PC-3 (cell line): ENCODE measurements at regions of chr5 and their contacts with region 1.

Region 1: DNA sequence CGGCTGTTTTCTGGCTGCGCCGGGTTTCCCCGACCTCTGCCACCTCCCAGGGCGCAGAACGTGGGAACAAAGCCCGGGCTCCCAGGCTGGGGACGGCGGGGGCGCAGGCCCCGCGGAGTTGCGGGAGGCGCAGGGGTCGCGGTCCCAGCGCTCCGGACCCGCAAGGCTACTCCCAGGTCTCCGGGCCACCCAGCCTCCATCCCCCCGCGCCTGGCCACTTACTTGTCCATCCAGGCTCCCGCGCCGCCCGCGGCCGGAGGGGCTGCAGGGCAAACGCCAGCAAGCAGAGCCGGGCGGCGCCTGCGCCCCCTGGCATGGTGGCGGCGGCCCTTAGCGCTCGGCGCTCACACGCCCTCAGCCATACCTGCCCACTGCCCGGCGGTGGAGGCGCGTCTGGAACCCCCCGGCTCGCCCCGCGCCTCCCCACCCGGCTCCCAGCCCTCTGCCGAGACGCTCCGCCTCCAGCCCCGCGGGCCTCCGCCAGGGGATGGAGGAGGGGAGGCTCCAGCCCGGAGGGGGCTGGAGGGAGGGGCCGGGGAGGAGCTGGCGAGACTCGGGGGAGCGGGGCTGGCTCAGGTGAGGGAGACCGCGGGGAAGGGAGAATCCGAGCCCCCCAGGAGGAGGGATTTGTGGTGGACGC is at the start of gene ADAM19:
- DNase-seq: peak; percentile 86
- ATAC-seq: peak; percentile 86
- H3K4me3 ChIP-seq: peak within 1 kb of the TSS; percentile 96
- H3K27ac ChIP-seq: peak within 1 kb of the TSS; percentile 76
- H3K4me1 ChIP-seq: peaks cover 34% of the 10 kb centered on the region
- H3K27me3 ChIP-seq: no peaks in the 10 kb centered on the region
- CTCF ChIP-seq: peak; percentile 22; the same call in 1 of the 2 replicates
- total RNA-seq, gene ADAM19: 115 and 130 TPM in 2 replicates

Region 2: DNA sequence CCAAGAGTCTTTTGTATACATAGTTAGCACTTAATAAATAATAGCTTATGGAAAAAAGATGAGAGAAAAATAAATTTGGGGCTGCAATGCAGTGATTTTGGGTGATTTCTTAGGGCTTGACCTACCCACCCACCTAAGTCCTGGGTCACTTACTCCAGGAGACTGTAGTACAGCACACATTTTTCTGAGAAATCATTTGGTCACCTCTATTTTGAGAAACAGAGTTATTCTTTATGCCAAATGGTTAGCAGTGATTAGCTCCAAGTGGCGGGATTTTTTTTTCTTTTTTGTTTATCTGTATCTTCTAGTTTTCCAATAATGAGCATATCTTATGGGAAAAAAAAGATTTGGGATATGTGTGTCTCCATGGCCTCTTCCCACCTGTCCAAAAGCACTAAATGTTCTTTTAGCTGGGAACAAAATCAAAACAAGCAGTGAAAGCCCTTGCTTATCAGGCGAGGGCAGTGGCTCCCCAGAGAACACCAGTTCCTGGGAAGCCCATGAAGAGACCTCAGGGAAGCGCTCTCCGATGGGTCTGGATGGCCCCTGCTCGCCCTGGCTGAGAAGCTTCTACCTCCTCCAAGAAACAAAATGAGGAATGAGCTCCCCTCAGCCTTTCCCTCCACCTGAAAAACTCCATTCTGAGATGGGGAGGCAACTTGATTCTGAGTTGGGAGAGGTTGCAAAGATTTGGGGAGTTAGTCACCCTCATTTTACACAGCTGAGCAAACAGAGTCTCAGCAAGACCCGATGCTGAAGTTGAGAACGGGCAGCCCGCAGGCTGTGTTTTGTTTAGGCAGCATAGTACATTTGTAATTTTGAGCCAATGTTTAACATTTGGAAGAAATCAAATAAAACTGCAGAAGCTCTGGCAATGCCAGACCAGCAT is 239.7 kb before region 1 on chr5:
- CTCF ChIA-PET with region 1: no interaction called
- POLR2A ChIA-PET with region 1: no interaction called
- intact Hi-C with region 1: loop called (anchors 10 kb)
- DNase-seq: peak; percentile 53
- ATAC-seq: peak; percentile 82
- H3K4me3 ChIP-seq: no peak overlapping the region
- H3K27ac ChIP-seq: no peak overlapping the region
- H3K4me1 ChIP-seq: peaks cover 11% of the 10 kb centered on the region
- H3K27me3 ChIP-seq: no peaks in the 10 kb centered on the region
- CTCF ChIP-seq: no peak

Region 3: GRCh38 chr5:157548513-157549297 is 26.8 kb before region 1 on chr5:
- CTCF ChIA-PET with region 1: no interaction called
- POLR2A ChIA-PET with region 1: no interaction called
- intact Hi-C with region 1: loop called (anchors 2 kb)
- DNase-seq: peak; percentile 81
- ATAC-seq: no peak
- H3K4me3 ChIP-seq: peak overlapping the region; percentile 1; the same call in 1 of the 2 replicates
- H3K27ac ChIP-seq: peak overlapping the region; percentile 70
- H3K4me1 ChIP-seq: peaks cover 39% of the 10 kb centered on the region
- H3K27me3 ChIP-seq: no peaks in the 10 kb centered on the region
- CTCF ChIP-seq: no peak

Region 4: DNA sequence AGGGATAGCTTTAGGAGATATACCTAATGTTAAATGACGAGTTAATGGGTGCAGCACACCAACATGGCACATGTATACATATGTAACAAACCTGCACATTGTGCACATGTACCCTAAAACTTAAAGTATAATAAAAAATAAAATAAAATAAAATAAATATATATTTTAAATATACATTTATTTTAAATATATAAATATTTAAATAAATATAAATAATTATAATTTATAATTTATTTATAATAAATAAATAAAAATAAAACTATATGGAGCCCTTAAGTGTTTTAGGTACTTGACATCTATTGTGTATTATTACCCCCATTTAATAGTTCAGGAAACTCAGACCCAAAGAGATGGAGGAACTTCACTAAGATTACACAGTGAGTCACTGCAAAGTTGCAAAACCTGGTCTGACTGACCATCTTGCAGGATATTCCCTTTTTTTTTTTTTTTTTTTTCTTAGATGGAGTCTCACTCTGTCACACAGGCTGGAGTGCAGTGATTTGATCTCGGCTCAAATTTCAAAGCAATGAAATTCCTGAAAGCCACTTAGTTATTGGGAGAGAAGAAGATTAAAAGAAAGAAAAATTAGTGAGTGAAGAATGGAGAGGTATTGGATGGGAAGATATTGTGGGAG is 90.1 kb after region 1 on chr5:
- CTCF ChIA-PET with region 1: no interaction called
- POLR2A ChIA-PET with region 1: no interaction called
- intact Hi-C with region 1: loop called (anchors 1 kb)
- DNase-seq: peak; percentile 98
- ATAC-seq: peak; percentile 64
- H3K4me3 ChIP-seq: no peak overlapping the region
- H3K27ac ChIP-seq: peak overlapping the region; percentile 70
- H3K4me1 ChIP-seq: peaks cover 20% of the 10 kb centered on the region
- H3K27me3 ChIP-seq: no peaks in the 10 kb centered on the region
- CTCF ChIP-seq: no peak

Region 5: DNA sequence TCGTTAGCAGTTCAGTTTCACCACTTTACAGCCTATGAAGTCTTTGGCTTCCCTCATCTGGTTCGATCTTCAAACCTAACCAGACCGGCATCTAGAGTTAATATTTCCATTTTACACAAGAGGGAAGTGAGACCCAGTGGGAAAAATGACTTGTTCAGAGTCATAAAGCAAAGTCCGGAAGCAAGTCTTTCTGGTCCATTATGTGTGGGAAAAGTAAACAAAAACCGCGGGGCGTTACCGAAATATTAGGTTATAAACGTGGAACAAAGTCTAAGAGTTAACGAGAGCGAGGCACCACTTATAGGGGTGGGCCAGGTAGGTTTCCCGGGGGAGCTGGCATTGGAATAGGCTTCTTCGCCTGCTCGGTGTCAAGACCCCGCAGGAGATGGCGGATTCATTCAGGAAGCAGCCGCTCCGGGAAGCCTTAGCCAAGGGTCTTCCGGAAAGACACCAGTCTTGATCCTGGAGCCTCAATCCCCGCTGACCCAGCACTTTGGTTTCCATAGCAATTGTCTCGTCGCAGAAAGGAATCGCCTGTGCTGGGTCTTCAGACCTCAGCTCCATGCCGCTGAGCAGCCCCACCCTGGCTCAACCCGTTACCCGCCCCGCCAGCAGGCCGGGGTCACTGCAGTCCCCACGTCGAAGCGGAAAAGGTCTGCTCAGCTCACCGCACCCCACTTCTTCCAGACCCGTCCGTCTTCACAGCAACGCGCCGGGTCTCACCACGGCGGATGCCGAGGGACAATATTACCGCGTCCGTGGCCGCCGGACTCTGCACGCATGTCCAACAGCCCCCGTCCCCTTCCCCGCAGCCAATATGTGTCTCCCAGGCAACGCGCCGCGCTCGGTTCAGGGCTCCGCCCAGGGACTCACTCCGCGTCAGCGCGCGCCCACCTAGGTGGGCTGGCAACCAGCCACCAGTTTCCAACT is 95.4 kb after region 1 on chr5 and contains the start of gene C5orf52:
- CTCF ChIA-PET with region 1: no interaction called
- POLR2A ChIA-PET with region 1: no interaction called
- intact Hi-C with region 1: loop called (anchors 2 kb)
- DNase-seq: peak; percentile 96
- ATAC-seq: peak; percentile 58
- H3K4me3 ChIP-seq: peak within 1 kb of the TSS; percentile 64
- H3K27ac ChIP-seq: peak within 1 kb of the TSS; percentile 91
- H3K4me1 ChIP-seq: peaks cover 29% of the 10 kb centered on the region
- H3K27me3 ChIP-seq: no peaks in the 10 kb centered on the region
- CTCF ChIP-seq: no peak
- total RNA-seq, gene C5orf52: 0.84 TPM in 1 of 2 replicates, not detected in the other

Region 6: GRCh38 chr5:157718519-157718918 is 143.0 kb after region 1 on chr5:
- CTCF ChIA-PET with region 1: no interaction called
- POLR2A ChIA-PET with region 1: no interaction called
- intact Hi-C with region 1: loop called (anchors 2 kb)
- DNase-seq: peak; percentile 92
- ATAC-seq: peak; percentile 97
- H3K4me3 ChIP-seq: no peak overlapping the region
- H3K27ac ChIP-seq: peak overlapping the region; percentile 58
- H3K4me1 ChIP-seq: peaks cover 20% of the 10 kb centered on the region
- H3K27me3 ChIP-seq: no peaks in the 10 kb centered on the region
- CTCF ChIP-seq: peak; percentile 90